Activated T-helper 1 cell treated with anti-CD3 and anti-CD28 coated beads, Interleukin-12 subunit alpha, Interleukin-12 subunit beta, Interleukin-2, Interleukin-4 antibody, amounts not matched to agents 30 ng/mL and 10 ng/mL and 1 ng/mL, durations not matched to agents 14 hours and 24 hours and 36 hours (primary cell): ENCODE measurements at regions of chr17 and their contacts with region 1.

Region 1: DNA sequence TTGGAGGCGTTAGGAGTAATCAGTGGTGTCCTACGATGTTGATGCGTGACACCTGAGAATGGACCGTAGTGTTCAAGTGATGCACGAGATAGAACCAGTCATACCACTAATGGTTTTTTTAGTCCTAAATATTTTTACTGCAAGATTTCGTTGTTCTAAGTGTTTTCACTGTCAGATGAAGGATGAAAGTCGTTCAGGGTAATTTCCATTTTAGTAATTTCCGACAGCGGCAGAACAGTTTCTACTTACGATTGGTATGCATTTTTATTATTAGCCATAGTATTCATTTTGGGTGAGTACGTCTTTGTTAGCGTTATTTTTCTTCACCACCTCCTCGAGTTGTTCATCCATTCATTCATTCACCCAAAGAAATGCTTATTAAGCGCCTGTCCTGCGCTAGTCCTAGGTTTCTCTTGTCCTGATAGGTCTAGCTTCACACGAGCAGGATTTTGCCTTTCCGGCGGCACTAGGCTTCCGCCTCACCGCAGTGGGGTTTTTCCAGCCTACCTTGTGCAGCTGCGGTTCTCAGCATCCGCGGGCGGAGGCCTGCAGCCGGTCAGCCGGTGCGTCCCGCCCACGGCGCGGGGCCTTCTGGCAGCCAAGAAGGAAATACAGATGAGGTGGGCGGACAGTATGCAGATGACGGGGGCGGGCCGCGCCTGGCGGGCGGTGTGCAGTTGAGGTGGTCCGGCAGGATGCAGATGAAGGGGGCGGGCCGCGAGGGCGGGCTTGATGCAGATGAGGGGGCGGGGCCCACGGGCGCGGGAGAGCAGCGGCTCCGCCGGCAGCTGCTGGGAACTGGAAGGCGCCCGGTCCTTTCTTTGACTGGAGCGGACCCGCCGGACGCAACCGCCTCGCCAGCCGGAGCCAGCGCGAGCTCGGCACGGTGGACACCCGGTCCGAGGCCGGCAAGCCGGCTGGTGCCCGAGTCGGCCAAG is 146.4 kb downstream of the SPECC1 start:
- DNase-seq: peak; percentile 96
- H3K4me3 Mint-ChIP-seq: no peak overlapping the region
- H3K27ac Mint-ChIP-seq: no peak overlapping the region
- H3K4me1 Mint-ChIP-seq: no peaks in the 10 kb centered on the region
- H3K27me3 Mint-ChIP-seq: peaks cover 16% of the 10 kb centered on the region

Region 2: GRCh38 chr17:19579867-19580565 is 575.5 kb before region 1 on chr17:
- intact Hi-C with region 1: no loop called
- DNase-seq: no peak
- H3K4me3 Mint-ChIP-seq: no peak overlapping the region
- H3K27ac Mint-ChIP-seq: no peak overlapping the region
- H3K4me1 Mint-ChIP-seq: no peaks in the 10 kb centered on the region
- H3K27me3 Mint-ChIP-seq: peaks cover 38% of the 10 kb centered on the region

Region 3: DNA sequence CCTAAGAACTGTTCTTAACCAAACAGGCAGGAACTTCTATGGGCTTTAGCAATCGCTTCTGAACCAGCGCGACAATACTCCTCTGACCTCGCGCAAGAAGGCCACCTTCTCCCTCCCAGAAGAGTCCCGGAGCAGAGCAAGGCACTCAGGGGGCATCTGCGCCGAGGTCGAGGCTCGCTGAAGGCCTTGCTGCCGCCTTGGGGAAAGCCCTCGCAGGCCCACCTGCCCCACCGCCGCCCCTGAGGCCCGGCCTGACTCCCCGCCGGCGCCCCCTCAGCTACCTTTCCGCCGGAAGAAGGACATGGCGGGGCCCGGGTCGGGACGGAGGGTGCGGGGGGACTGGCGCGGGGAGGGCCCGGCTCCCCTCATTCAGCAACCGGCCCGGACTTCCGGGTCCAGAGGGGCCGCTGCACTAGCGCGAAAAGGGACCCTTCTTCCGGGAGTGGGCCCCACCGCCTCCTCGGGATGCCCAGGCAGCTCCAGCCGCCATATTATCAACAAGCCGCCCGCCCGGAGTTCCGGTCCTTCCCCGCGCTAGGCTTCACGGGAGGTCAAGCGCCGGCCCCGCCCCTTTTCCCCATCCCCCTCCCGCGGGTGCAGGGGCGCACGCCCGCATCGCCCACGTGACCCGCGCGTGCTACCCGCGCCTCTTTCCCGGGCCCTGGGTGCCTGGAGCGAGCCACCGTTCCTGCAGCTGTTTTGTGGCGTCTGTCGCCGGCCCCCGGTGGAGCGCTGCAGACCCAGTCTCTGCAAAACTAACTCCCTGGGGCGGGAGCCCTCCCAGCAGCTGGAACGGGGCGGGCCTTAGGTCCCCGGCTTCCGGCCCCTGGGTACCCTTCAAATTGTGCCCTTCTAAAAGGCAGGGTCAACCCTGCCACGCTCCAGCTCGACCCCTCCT is 178.0 kb before region 1 on chr17 and contains the start of gene AKAP10:
- intact Hi-C with region 1: loop called (anchors 1 kb)
- DNase-seq: peak; percentile 88
- H3K4me3 Mint-ChIP-seq: peak within 1 kb of the TSS; percentile 91
- H3K27ac Mint-ChIP-seq: peak within 1 kb of the TSS; percentile 94
- H3K4me1 Mint-ChIP-seq: peaks cover 42% of the 10 kb centered on the region
- H3K27me3 Mint-ChIP-seq: no peaks in the 10 kb centered on the region
- total RNA-seq, gene AKAP10: 38.8 and 39.3 TPM in 2 replicates

Region 4: GRCh38 chr17:20263595-20263994 is 108.1 kb after region 1 on chr17:
- intact Hi-C with region 1: no loop called
- DNase-seq: no peak
- H3K4me3 Mint-ChIP-seq: no peak overlapping the region
- H3K27ac Mint-ChIP-seq: no peak overlapping the region
- H3K4me1 Mint-ChIP-seq: peaks cover 26% of the 10 kb centered on the region
- H3K27me3 Mint-ChIP-seq: no peaks in the 10 kb centered on the region

Region 5: DNA sequence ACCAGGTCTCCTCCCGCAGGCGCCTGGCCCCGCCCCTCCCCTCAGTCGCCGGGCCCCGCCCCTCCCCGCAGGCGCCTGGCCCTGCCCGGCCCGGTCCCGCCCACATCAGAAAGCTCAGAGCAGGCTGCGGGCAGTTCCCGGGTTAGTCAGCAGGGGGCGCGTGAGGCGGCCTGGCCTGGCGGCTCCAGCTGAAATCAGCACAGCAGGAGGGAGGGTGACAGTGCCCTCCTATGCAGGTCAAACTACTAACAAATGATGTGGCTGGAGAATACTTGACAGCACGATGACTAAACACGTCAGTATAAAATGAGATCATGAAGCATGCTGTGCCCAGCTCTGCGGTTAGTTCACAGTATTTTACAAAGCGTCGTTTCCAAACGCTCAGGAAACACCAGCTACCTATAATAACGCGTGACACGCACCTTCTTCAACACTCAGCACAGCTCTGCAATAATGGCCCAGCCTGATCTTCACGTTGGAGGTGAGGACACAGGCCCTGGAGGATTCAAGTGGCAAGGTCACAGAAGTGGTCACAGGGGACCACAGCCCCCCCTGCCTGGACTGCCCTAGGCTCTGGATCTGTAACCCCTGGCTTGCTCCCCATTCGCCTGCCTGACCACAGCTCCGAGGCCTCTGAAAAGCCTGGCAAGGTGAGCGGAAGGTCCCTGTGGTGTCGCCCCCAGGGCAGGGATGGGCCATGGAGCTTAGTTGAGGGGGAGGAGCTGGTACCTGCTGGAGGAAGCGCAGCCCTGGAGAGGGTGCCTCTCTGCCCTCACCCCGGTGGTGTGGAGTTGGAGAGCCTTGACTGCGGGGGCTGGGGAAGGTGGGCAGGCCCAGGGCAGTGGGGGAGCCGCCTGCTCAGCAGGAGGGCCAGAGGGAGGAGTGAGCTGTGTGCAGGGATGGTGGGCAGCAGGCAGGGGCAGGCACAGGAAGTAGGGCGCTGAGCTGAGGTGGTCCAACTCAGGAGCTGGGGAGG is 1301.8 kb after region 1 on chr17:
- intact Hi-C with region 1: loop called (anchors 10 kb)
- DNase-seq: peak; percentile 85
- H3K4me3 Mint-ChIP-seq: no peak overlapping the region
- H3K27ac Mint-ChIP-seq: peak overlapping the region; percentile 64
- H3K4me1 Mint-ChIP-seq: peaks cover 10% of the 10 kb centered on the region
- H3K27me3 Mint-ChIP-seq: peaks cover 25% of the 10 kb centered on the region